Activated T-helper 2 cell treated with anti-CD3 and anti-CD28 coated beads, Interferon-gamma antibody, Interleukin-2, Interleukin-4, amounts not matched to agents 10 μg/mL and 5 μg/mL and 100 μg/mL, durations not matched to agents 14 hours and 24 hours and 36 hours (primary cell): ENCODE measurements at regions of chr16 and their contacts with region 1.

Region 1: DNA sequence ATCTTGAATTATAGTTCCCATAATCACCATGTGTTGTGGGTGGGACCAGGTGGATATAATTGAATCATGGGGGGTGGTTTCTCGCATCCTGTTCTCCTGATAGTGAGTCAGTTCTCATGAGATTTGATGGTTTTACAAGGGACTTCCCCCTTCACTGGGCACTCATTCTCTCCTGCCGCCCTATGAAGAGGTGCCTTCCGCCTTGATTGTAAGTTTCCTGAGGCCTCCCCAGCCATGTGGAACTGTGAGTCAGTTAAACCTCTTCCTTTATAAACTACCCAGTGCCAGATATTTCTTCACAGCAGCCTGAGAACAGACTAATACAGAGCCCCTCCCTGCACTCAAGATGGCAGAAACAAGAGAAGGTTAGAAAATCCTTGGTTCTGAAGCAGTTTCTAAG is 26.4 kb downstream of the LDAF1 start:
- DNase-seq: no peak
- H3K4me3 Mint-ChIP-seq: no peak overlapping the region
- H3K27ac Mint-ChIP-seq: no peak overlapping the region
- H3K4me1 Mint-ChIP-seq: peaks cover 13% of the 10 kb centered on the region
- H3K27me3 Mint-ChIP-seq: no peaks in the 10 kb centered on the region

Region 2: DNA sequence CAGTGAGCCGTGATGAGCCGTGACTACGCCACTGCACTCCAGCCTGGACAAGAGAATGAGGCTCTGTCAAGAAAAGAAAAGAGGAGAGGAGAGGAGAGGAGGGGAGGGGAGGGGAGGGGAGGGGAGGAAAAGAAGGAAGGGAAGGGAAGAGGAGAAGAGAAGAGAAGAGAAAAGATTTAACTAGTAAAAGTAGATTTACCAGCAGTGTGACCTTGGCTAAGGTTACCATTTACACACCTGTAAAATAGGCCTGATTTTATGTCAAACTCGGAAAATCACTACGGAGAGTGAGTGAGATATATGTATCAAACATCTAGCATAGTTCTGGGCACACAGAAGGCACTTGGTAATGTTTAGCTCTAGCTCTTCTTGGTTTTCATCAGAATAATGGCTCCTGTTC is 175.0 kb before region 1 on chr16:
- intact Hi-C with region 1: no loop called
- DNase-seq: no peak
- H3K4me3 Mint-ChIP-seq: no peak overlapping the region
- H3K27ac Mint-ChIP-seq: no peak overlapping the region
- H3K4me1 Mint-ChIP-seq: no peaks in the 10 kb centered on the region
- H3K27me3 Mint-ChIP-seq: peaks cover 30% of the 10 kb centered on the region

Region 3: DNA sequence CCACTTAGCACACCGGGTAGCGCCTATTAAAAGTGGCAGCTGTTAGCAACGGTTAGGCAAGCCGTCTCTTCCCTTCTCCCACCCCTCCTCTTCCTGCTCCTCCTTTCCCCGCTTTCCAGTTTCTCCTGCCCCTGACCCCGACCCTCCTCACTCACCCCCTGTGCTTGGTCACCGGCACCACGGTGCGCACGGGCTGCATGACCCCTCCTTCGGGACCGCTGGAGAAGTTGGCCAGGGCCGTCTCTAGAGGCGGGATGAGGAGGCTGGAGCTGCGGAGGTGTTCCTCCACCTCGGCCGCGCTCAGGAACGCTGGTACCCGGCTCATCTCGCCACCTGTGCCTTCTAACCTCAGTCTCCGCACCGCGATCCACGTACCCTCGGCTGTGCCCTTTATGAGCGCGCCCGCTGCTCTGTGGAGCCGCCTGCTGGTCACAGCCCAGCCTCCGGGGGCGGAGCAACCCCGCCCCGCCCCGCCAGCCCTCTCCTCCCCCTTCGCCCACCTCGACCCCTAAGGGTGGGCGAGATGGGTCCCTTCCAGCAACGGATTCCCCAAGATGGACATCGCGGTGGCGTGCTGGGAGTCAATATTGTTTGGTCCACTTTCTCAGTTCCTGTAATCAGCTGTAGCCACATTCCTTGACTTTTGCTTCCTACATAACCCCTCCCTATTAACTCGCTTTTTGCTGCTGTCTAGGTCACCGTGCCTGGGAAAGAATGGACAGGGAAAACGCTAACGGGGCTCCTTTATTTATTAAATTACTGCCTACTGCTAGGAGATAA is 93.3 kb after region 1 on chr16 and contains the start of gene CRYM:
- intact Hi-C with region 1: loop called (anchors 1 kb)
- DNase-seq: peak; percentile 20
- H3K4me3 Mint-ChIP-seq: peak within 1 kb of the TSS; percentile 27
- H3K27ac Mint-ChIP-seq: no peak within 1 kb of the TSS
- H3K4me1 Mint-ChIP-seq: peaks cover 3% of the 10 kb centered on the region
- H3K27me3 Mint-ChIP-seq: peaks cover 61% of the 10 kb centered on the region
- total RNA-seq, gene CRYM: not detected in 2 replicates

Region 4: GRCh38 chr16:21300309-21301167 is 115.7 kb after region 1 on chr16:
- intact Hi-C with region 1: loop called (anchors 5 kb)
- DNase-seq: peak; percentile 54
- H3K4me3 Mint-ChIP-seq: peak overlapping the region; percentile 89
- H3K27ac Mint-ChIP-seq: peak overlapping the region; percentile 59
- H3K4me1 Mint-ChIP-seq: peaks cover 19% of the 10 kb centered on the region
- H3K27me3 Mint-ChIP-seq: peaks cover 38% of the 10 kb centered on the region

Region 5: DNA sequence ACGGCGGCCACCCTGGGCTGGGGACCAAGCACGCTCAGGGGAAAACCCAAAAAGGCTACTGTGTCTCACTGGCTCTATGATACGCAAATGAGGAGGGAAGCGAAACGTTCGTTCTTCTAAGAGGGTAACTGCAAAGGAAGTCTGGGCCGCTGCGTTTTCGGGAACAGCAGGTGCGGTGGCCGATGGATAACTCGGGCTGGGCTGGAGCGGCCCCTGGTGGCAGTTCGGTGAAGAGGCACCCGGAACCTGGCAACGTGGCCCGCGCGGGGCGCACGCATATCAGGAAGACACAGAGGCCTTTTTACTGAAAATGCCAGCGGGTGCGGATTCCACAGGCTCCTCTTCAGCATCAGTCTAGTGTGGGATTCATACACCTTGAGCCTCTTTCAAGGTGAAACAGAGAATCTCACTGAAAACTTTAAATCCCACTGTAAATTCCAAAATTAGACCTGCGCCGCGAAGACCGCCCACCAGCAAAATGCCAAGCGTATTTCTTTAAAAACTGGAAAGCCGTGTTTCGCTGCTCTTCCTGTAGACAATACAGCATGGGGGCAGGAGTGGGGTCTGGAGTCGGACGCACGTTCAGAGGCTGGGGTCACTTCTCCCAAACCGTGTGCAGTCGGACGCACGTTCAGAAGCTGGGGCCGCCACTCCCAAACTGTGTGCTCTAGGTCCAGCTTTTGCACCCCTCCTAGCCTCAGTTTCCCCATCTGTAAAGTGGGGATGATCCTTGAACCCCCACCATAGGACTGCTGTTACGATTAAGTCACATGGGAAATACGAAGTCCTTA is 370.2 kb after region 1 on chr16:
- intact Hi-C with region 1: loop called (anchors 5 kb)
- DNase-seq: peak; percentile 91
- H3K4me3 Mint-ChIP-seq: peak overlapping the region; percentile 53
- H3K27ac Mint-ChIP-seq: peak overlapping the region; percentile 85
- H3K4me1 Mint-ChIP-seq: peaks cover 12% of the 10 kb centered on the region
- H3K27me3 Mint-ChIP-seq: no peaks in the 10 kb centered on the region